ENCODE measurements at regions of chr1 and their contacts with region 1.

Region 1: GRCh38 chr1:89125913-89126580 is at the start of gene GBP2:
- DNase-seq: peak; percentile 32
- H3K4me3 Mint-ChIP-seq: peak within 1 kb of the TSS; percentile 95
- H3K27ac Mint-ChIP-seq: peak within 1 kb of the TSS; percentile 97
- H3K4me1 Mint-ChIP-seq: peaks cover 65% of the 10 kb centered on the region
- H3K27me3 Mint-ChIP-seq: no peaks in the 10 kb centered on the region
- total RNA-seq, gene GBP2: 225 and 229 TPM in 2 replicates

Region 2: GRCh38 chr1:88983791-88984559 is 142.1 kb before region 1 on chr1:
- intact Hi-C with region 1: loop called (anchors 1 kb)
- DNase-seq: no peak
- H3K4me3 Mint-ChIP-seq: peak overlapping the region; percentile 31
- H3K27ac Mint-ChIP-seq: peak overlapping the region; percentile 45
- H3K4me1 Mint-ChIP-seq: peaks cover 86% of the 10 kb centered on the region
- H3K27me3 Mint-ChIP-seq: no peaks in the 10 kb centered on the region

Region 3: GRCh38 chr1:89104147-89104546 is 21.9 kb before region 1 on chr1:
- intact Hi-C with region 1: loop called (anchors 2 kb)
- DNase-seq: no peak
- H3K4me3 Mint-ChIP-seq: no peak overlapping the region
- H3K27ac Mint-ChIP-seq: peak overlapping the region; percentile 14
- H3K4me1 Mint-ChIP-seq: peaks cover 9% of the 10 kb centered on the region
- H3K27me3 Mint-ChIP-seq: no peaks in the 10 kb centered on the region

Region 4: GRCh38 chr1:89274411-89274857 is 148.4 kb after region 1 on chr1:
- intact Hi-C with region 1: loop called (anchors 1 kb)
- DNase-seq: peak; percentile 43
- H3K4me3 Mint-ChIP-seq: peak overlapping the region; percentile 75
- H3K27ac Mint-ChIP-seq: peak overlapping the region; percentile 97
- H3K4me1 Mint-ChIP-seq: peaks cover 66% of the 10 kb centered on the region
- H3K27me3 Mint-ChIP-seq: no peaks in the 10 kb centered on the region

Region 5: GRCh38 chr1:89310505-89310904 is 184.5 kb after region 1 on chr1:
- intact Hi-C with region 1: loop called (anchors 2 kb)
- DNase-seq: no peak
- H3K4me3 Mint-ChIP-seq: peak overlapping the region; percentile 47
- H3K27ac Mint-ChIP-seq: peak overlapping the region; percentile 87
- H3K4me1 Mint-ChIP-seq: peaks cover 64% of the 10 kb centered on the region
- H3K27me3 Mint-ChIP-seq: no peaks in the 10 kb centered on the region

Measured in activated T-helper 1 cell treated with anti-CD3 and anti-CD28 coated beads, Interleukin-12 subunit alpha, Interleukin-12 subunit beta, Interleukin-2, Interleukin-4 antibody, amounts not matched to agents 30 ng/mL and 10 ng/mL and 1 ng/mL, durations not matched to agents 14 hours and 24 hours and 36 hours (primary cell).